AG04449 (cell line): ENCODE measurements at regions of chr3 and their contacts with region 1.

Region 1: GRCh38 chr3:149879872-149880271 is 66.9 kb downstream of the RNF13 start:
- DNase-seq: no peak
- H3K4me3 ChIP-seq: no peak overlapping the region
- CTCF ChIP-seq: peak; percentile 68

Region 2: GRCh38 chr3:149839896-149840295 is 40.0 kb before region 1 on chr3:
- CTCF ChIA-PET with region 1: interaction called, 11 read pairs
- POLR2A ChIA-PET with region 1: no interaction called
- DNase-seq: no peak
- H3K4me3 ChIP-seq: no peak overlapping the region
- CTCF ChIP-seq: no peak

Region 3: GRCh38 chr3:149894205-149894604 is 14.3 kb after region 1 on chr3:
- CTCF ChIA-PET with region 1: interaction called, 39 read pairs
- POLR2A ChIA-PET with region 1: no interaction called
- DNase-seq: no peak
- H3K4me3 ChIP-seq: no peak overlapping the region
- CTCF ChIP-seq: no peak

Region 4: DNA sequence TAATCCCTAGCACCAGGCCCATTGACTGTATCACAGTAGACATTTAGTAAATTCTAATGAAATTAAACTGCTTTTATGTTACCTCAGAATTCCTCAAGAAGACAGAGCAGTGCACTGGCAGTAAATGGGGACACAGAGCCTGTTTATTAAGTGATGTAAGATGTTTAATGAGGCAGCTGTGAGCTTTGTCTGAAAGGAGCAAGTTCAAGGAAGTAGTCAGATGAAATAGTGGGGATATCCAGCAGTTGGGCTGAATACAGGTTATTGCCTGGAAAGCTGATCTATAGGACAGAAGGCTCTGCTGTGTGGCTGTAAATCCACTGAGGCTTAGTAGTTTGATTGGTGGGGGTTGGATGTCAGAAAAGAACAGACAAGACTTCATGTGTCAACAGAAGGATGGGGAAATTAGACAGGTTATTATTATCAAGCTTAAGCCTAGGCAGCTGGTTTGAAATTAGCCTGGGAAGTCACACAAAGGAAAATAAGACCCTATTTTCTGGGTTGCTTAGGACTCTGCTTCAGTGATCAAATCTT is 28.6 kb after region 1 on chr3:
- CTCF ChIA-PET with region 1: interaction called, 20 read pairs
- POLR2A ChIA-PET with region 1: no interaction called
- DNase-seq: no peak
- H3K4me3 ChIP-seq: no peak overlapping the region
- CTCF ChIP-seq: no peak

Region 5: DNA sequence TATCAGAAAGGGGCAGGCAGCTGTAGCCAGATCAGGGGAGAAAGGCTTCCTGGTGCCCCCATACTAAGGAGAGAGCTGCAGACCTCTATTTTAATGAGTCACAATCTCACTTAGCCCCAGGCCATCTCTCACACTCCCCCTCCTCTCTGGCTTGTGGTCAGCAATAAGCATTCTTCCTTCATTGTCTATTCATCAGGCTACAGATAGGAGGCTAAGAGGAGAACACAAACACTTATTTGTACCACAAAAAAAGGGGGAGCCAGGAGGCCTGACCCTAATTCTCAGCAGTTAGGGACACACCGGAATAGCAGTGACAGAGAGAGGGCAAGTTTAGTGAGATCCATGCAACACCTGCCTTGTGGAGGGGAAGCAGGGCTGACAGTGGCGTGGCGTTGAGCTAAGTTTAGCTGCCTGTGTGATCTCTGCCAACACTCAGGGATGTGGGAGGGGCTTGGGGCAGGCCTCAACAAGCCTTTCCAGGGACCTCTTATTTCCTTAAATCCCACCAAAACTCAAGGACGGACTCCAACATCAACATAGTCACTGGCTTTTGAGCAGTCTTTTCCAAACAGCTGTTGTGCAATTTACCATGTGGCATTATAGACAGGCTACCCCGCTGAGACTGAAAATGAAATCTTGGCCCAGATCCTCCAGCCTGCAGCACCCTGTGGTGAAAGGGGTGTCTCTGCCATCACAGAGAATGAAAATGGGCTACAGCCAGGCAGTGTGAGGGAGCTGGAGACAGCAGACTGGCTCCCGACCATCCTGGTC is 336.4 kb after region 1 on chr3:
- CTCF ChIA-PET with region 1: interaction called, 16 read pairs
- POLR2A ChIA-PET with region 1: no interaction called
- DNase-seq: peak; percentile 68
- H3K4me3 ChIP-seq: no peak overlapping the region
- CTCF ChIP-seq: no peak